ENCODE measurements at regions of chr9 and their contacts with region 1.

Region 1: GRCh38 chr9:36995927-36996705 is 38.0 kb downstream of the PAX5 start:
- DNase-seq: peak; percentile 86
- ATAC-seq: peak; percentile 34
- H3K4me3 ChIP-seq: peak overlapping the region in 4 of 5 experiments; percentile 16 to 58 (median 33)
- H3K4me3 Mint-ChIP-seq: peak overlapping the region; percentile 74
- H3K27ac ChIP-seq: peak overlapping the region; percentile 97 to 98
- H3K27ac Mint-ChIP-seq: peak overlapping the region; percentile 96
- H3K4me1 ChIP-seq: peaks cover 96 to 99% of the 10 kb centered on the region in 2 donors
- H3K4me1 Mint-ChIP-seq: peaks cover 94% of the 10 kb centered on the region
- H3K27me3 ChIP-seq: no peaks in the 10 kb centered on the region
- H3K27me3 Mint-ChIP-seq: no peaks in the 10 kb centered on the region
- CTCF ChIP-seq: peak; percentile 76

Region 2: DNA sequence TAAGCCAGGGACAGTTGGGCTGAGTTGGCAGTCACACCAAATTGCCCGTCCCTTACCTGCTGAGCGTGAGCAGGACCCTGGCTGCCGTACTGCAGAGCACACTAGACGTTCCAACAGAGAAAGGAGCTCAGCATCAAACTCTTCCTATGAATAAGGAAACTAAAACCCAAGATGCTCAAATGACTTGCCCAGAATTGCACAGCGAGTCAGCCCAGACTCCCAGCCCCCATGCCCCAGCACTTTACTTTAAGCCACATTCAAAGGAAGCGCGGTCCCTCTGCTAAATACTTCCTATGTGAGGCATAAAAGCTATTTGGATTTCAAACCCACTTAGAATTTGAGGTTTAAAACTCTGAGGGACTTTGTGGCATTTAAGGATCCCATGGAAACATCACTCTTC is 14.1 kb after region 1 on chr9:
- CTCF ChIA-PET with region 1: interaction called, 44 read pairs
- POLR2A ChIA-PET with region 1: interaction called, 14 read pairs
- intact Hi-C with region 1: loop called (anchors 2 kb)
- DNase-seq: peak; percentile 39
- ATAC-seq: peak; percentile 19
- H3K4me3 ChIP-seq: peak overlapping the region in 3 of 5 experiments; percentile 7 to 40 (median 12)
- H3K4me3 Mint-ChIP-seq: peak overlapping the region; percentile 75
- H3K27ac ChIP-seq: peak overlapping the region; percentile 77 to 83
- H3K27ac Mint-ChIP-seq: peak overlapping the region; percentile 98
- H3K4me1 ChIP-seq: peaks cover 95 to 97% of the 10 kb centered on the region in 2 donors
- H3K4me1 Mint-ChIP-seq: peaks cover 91% of the 10 kb centered on the region
- H3K27me3 ChIP-seq: no peaks in the 10 kb centered on the region
- H3K27me3 Mint-ChIP-seq: no peaks in the 10 kb centered on the region
- CTCF ChIP-seq: no peak

Region 3: DNA sequence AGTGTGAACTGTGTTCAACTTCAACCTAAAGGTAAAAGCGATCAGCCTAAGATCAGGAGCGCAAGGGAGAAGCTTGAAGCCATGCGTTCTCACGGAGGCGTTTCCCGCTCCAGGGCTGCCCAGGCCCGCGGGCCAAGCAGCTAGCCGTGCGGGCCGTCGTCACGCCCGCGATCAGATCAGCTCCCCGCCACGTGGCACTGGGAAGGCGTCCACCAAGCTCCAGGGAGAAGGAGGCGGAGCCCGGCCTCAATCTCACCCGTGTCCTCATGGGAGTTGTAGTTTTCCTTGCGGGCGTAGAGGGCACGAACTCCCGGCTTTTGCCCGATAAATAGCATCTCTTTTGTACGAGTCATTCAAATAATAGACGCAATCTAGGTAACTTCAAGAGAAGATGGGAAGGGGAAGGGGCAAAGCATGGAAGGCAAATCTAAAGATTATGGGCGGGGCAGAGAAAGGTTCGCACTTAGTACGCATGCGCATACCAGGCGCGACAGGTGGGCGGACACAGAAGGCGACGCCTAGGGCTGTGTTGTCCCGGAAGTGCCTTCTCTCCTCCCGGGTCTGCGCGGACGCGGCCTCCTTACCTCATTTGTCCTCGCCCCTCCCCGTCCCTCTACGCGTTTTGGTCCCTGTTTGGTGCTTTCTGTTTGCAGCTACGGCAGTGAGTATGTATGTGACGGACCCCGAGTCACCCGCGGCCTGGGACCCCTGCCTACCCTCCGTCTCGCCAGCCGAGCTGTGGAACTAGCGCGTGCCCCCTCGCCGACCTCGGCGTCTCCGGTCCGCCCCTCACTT is 83.5 kb after region 1 on chr9:
- CTCF ChIA-PET with region 1: interaction called, 8 read pairs
- POLR2A ChIA-PET with region 1: interaction called, 3 read pairs
- intact Hi-C with region 1: loop called (anchors 1 kb)
- DNase-seq: peak; percentile 96
- ATAC-seq: peak; percentile 95
- H3K4me3 ChIP-seq: peak overlapping the region; percentile 84 to 99 (median 95)
- H3K4me3 Mint-ChIP-seq: peak overlapping the region; percentile 99
- H3K27ac ChIP-seq: peak overlapping the region; percentile 91 to 97
- H3K27ac Mint-ChIP-seq: peak overlapping the region; percentile 98
- H3K4me1 ChIP-seq: peaks cover 54 to 55% of the 10 kb centered on the region in 2 donors
- H3K4me1 Mint-ChIP-seq: peaks cover 74% of the 10 kb centered on the region
- H3K27me3 ChIP-seq: no peaks in the 10 kb centered on the region
- H3K27me3 Mint-ChIP-seq: no peaks in the 10 kb centered on the region
- CTCF ChIP-seq: no peak

Region 4: GRCh38 chr9:37293664-37294524 is 297.8 kb after region 1 on chr9:
- CTCF ChIA-PET with region 1: interaction called, 11 read pairs
- POLR2A ChIA-PET with region 1: interaction called, 4 read pairs
- intact Hi-C with region 1: no loop called
- DNase-seq: peak; percentile 81
- ATAC-seq: peak; percentile 70
- H3K4me3 ChIP-seq: peak overlapping the region in 3 of 5 experiments; percentile 4 to 8 (median 7)
- H3K4me3 Mint-ChIP-seq: peak overlapping the region; percentile 74
- H3K27ac ChIP-seq: peak overlapping the region; percentile 79 to 88
- H3K27ac Mint-ChIP-seq: peak overlapping the region; percentile 95
- H3K4me1 ChIP-seq: peaks cover 79 to 97% of the 10 kb centered on the region in 2 donors
- H3K4me1 Mint-ChIP-seq: peaks cover 82% of the 10 kb centered on the region
- H3K27me3 ChIP-seq: no peaks in the 10 kb centered on the region
- H3K27me3 Mint-ChIP-seq: no peaks in the 10 kb centered on the region
- CTCF ChIP-seq: no peak

Region 5: GRCh38 chr9:37408933-37409710 is 413.0 kb after region 1 on chr9:
- CTCF ChIA-PET with region 1: interaction called, 8 read pairs
- POLR2A ChIA-PET with region 1: no interaction called
- intact Hi-C with region 1: loop called (anchors 1 kb)
- DNase-seq: peak; percentile 99
- ATAC-seq: peak; percentile 82
- H3K4me3 ChIP-seq: no peak overlapping the region
- H3K4me3 Mint-ChIP-seq: peak overlapping the region; percentile 78
- H3K27ac ChIP-seq: peak overlapping the region; percentile 72 to 91
- H3K27ac Mint-ChIP-seq: peak overlapping the region; percentile 97
- H3K4me1 ChIP-seq: peaks cover 58 to 72% of the 10 kb centered on the region in 2 donors
- H3K4me1 Mint-ChIP-seq: peaks cover 78% of the 10 kb centered on the region
- H3K27me3 ChIP-seq: no peaks in the 10 kb centered on the region
- H3K27me3 Mint-ChIP-seq: no peaks in the 10 kb centered on the region
- CTCF ChIP-seq: peak; percentile 31

Measured in B cell (primary cell).